ENCODE measurements at regions of chr16 and their contacts with region 1.

Region 1: DNA sequence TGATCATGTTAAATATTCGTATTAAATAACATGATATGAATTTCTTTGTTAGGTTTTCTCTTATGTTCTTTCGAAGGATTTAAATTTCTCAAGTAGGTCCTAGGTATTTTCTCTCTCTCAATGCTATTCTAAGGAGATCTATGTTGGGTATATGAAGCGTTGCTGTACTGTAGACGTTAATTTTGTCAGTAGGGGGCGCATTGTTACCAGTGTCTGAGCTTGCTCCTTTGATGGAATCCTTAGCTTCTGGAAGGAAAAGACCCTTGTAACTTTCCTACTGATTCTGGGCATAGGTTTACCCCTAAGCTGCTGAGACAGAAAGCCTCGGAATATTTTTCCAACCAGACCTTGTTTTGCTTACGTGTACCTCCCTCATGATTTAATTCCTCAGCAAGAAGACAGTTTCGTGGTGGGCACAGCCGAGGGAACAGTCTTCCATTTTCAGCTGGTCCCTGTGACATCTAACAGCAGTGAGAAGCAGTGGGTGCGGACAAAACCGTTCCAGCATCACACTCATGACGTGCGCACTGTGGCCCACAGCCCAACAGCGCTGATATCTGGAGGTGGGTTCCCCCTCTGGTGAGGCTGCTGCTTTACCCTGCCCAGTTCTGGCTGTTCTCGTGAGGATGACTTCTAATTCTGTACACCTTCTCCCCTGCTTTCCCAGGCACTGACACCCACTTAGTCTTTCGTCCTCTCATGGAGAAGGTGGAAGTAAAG is 17.9 kb downstream of the UTP4 start:
- DNase-seq: no peak

Region 2: DNA sequence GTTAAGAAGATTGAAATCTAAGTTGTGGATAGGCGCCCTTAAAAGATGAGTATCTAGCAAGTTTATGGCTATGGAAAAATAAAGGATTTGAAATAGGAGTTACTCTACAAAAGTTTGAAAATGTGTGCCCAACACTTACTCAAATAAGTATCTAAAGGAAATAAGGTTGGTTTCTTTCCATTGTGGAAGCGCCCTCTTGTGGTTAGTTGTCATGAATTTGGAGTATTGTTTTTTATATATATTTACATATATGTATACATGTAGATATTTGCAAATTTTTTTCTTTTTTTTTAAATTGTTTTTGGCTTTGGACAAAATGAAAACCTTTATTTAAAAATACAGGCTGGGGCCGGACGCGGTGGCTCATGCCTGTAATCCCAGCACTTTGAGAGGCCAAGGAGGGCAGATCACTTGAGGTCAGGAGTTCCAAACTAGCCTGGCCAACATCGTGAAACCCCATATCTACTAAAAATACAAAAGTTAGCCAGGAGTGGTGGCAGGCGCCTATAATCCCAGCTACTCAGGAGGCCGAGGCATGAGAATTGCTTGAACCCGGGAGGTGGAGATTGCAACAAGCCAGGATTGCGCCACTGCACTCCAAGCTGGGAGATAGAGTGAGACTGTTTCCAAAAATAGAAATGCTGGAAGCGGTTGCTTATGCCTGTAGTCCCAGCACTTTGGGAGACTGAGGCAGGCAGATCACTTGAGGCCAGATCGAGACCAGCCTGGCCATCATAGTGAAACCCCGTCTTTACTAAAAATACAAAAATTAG is 136.8 kb after region 1 on chr16:
- intact Hi-C with region 1: loop called (anchors 5 kb)
- DNase-seq: peak; percentile 90